Heart left ventricle (tissue), 16 donors: ENCODE measurements at regions of chr13 and their contacts with region 1.

Region 1: GRCh38 chr13:24355103-24355502 is 45.7 kb downstream of the C1QTNF9 start:
- DNase-seq: peak in 1 of 5 donors; percentile 48
- ATAC-seq: no peak
- H3K4me3 ChIP-seq: no peak overlapping the region
- H3K27ac ChIP-seq: no peak overlapping the region
- H3K4me1 ChIP-seq: no peaks in the 10 kb centered on the region
- H3K27me3 ChIP-seq: no peaks in the 10 kb centered on the region
- CTCF ChIP-seq: no peak
- POLR2A ChIP-seq: no peak

Region 2: GRCh38 chr13:22929381-22930126 is 1425.5 kb before region 1 on chr13:
- intact Hi-C with region 1: loop called in 1 of 10 experiments (anchors 5 kb)
- DNase-seq: no peak
- ATAC-seq: no peak
- H3K4me3 ChIP-seq: no peak overlapping the region
- H3K27ac ChIP-seq: no peak overlapping the region
- H3K4me1 ChIP-seq: peaks cover 0 to 11% (median 0%) of the 10 kb centered on the region in 12 donors
- H3K27me3 ChIP-seq: peaks cover 0 to 7% (median 0%) of the 10 kb centered on the region in 9 donors
- CTCF ChIP-seq: no peak
- POLR2A ChIP-seq: no peak

Region 3: DNA sequence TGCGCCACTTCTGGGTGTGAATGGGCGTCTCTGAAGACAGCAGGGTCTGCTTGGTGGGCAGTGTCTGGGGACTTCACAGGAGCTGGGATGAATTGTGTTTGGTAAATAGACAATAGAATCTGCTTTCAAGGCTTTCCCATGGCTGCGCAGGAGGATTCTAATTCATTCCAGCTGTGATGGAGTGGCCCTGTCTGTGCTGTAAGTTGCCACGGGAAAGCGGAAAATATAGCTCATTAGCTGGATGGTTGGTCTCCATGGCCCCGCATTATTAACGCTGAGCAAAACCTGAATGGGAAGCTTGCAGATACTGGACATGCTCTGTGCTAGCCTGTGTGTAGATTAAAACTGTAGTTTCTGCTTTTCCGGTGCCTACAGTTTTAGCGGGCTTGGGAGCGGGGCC is 61.4 kb before region 1 on chr13:
- intact Hi-C with region 1: no loop called
- DNase-seq: no peak
- ATAC-seq: no peak
- H3K4me3 ChIP-seq: no peak overlapping the region
- H3K27ac ChIP-seq: no peak overlapping the region
- H3K4me1 ChIP-seq: no peaks in the 10 kb centered on the region
- H3K27me3 ChIP-seq: no peaks in the 10 kb centered on the region
- CTCF ChIP-seq: no peak
- POLR2A ChIP-seq: no peak